Motor neuron (in vitro differentiated cells): ENCODE measurements at regions of chr3 and their contacts with region 1.

Region 1: DNA sequence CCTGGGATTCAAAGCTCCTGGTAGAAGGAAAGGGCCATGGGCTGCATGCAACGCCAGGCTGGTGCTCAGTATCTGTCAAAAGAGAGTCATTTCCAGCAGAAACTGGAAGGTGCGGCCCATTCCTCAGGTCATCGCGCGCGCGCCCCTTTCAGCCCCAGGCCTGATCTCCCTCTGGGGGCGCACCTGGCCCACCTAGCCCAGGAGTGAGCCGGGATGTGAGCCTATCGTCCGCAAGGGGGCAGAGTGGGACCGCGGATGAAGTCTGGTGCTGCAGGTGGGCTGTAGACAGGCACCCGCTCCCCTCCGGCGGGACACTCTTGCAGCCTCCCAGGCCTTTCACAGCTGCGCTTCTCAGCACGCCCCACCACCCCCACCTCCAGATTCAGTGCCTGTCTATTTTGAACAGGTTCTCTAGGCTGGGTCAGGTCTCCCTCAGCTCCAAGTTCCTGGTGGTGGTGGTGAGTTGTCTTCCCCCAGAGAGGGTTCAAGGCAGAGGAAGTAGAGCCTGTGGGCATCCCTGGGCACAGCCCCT is 5.8 kb upstream of the RPL29 start:
- ATAC-seq: peak; percentile 73 to 94 (median 78)
- H3K4me3 ChIP-seq: no peak overlapping the region
- H3K27ac ChIP-seq: no peak overlapping the region
- H3K4me1 ChIP-seq: peaks cover 38 to 49% of the 10 kb centered on the region in 2 donors

Region 2: GRCh38 chr3:52144034-52144795 is 142.7 kb after region 1 on chr3:
- in situ Hi-C with region 1: loop called (anchors 5 to 25 kb)
- ATAC-seq: peak; percentile 86 to 99 (median 92)
- H3K4me3 ChIP-seq: no peak overlapping the region
- H3K27ac ChIP-seq: peak overlapping the region; percentile 35 to 44
- H3K4me1 ChIP-seq: peaks cover 3 to 4% of the 10 kb centered on the region in 2 donors